Right ventricle myocardium superior (tissue), 1 donor: ENCODE measurements at regions of chr11 and their contacts with region 1.

Region 1: GRCh38 chr11:114762408-114762807 is 84.1 kb downstream of the NXPE2 start:
- DNase-seq: peak; percentile 77
- ATAC-seq: peak; percentile 92

Region 2: GRCh38 chr11:114340311-114341131 is 421.9 kb before region 1 on chr11:
- intact Hi-C with region 1: loop called (anchors 5 kb)
- DNase-seq: peak; percentile 51
- ATAC-seq: peak; percentile 93